Activated CD4-positive, alpha-beta T cell treated with anti-CD3 and anti-CD28 coated beads for 36 hours (primary cell): ENCODE measurements at regions of chr1 and their contacts with region 1.

Region 1: DNA sequence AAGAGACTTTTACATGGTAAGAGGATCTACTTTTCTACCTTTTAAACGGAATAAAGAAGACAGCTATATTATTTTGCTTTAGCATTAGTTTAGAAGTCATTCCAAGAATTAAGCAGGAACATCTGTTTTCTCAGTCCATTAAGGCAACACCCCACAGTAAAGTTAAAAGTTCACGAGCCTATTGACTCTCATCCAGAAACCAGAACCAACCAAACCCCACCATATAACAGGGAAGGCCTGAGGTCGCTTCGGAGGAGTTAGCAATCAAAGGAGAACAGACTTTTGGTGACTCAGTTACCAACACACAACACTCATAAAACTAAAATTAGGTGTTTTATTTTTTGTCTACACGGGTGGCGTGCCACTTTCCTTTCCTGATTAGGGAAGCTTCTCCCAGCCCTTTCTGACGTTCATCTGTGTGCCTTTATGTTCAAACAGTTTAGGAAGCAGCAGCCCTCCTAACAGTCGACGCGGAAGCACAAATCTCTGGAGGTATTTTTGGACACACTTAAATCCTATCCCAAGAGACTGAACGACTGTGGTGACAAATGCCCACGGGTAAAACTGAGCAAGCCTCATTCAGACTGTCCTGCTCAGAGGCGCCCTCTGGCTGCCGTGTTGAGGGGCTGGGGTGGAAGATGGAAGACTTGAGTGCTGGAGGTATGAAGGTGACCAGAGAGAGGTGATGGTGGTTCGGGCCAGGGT is 8.6 kb upstream of the PLA2G2C start:
- DNase-seq: peak; percentile 87
- ATAC-seq: peak; percentile 92
- H3K4me3 Mint-ChIP-seq: no peak overlapping the region
- H3K27ac Mint-ChIP-seq: no peak overlapping the region
- H3K4me1 Mint-ChIP-seq: peaks cover 2% of the 10 kb centered on the region
- H3K27me3 Mint-ChIP-seq: peaks cover 18% of the 10 kb centered on the region

Region 2: DNA sequence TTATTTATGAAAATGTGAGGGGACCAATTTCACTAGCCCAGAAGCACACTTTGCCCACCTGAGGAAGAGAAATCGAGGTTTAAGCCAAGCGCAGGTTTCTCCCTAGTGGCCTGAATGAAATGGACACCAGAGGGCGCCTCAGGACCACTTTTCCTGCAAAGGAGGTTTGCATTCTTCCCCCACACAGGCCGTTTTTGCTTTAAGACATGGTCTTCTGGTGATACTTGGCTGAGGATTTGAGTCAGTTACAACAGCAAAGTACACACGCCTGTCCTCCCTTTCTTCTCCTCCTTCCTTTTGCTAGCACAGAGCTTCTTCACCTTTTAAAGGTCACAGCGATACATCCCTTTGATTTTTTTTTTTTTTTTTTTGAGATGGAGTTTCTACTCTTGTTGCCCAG is 276.9 kb before region 1 on chr1:
- CTCF ChIA-PET with region 1: interaction called, 8 read pairs
- POLR2A ChIA-PET with region 1: no interaction called
- intact Hi-C with region 1: loop called (anchors 1 kb)
- DNase-seq: peak; percentile 90
- ATAC-seq: peak; percentile 78
- H3K4me3 Mint-ChIP-seq: no peak overlapping the region
- H3K27ac Mint-ChIP-seq: no peak overlapping the region
- H3K4me1 Mint-ChIP-seq: peaks cover 2% of the 10 kb centered on the region
- H3K27me3 Mint-ChIP-seq: no peaks in the 10 kb centered on the region

Region 3: GRCh38 chr1:19974822-19975416 is 220.0 kb before region 1 on chr1:
- CTCF ChIA-PET with region 1: interaction called, 11 read pairs
- POLR2A ChIA-PET with region 1: no interaction called
- intact Hi-C with region 1: loop called in 1 of 2 experiments (anchors 2 kb)
- DNase-seq: peak; percentile 46
- ATAC-seq: peak; percentile 65
- H3K4me3 Mint-ChIP-seq: no peak overlapping the region
- H3K27ac Mint-ChIP-seq: no peak overlapping the region
- H3K4me1 Mint-ChIP-seq: no peaks in the 10 kb centered on the region
- H3K27me3 Mint-ChIP-seq: peaks cover 19% of the 10 kb centered on the region

Region 4: GRCh38 chr1:20100632-20101355 is 94.1 kb before region 1 on chr1:
- CTCF ChIA-PET with region 1: no interaction called
- POLR2A ChIA-PET with region 1: no interaction called
- intact Hi-C with region 1: loop called in 1 of 2 experiments (anchors 1 kb)
- DNase-seq: peak; percentile 59
- ATAC-seq: peak; percentile 75
- H3K4me3 Mint-ChIP-seq: no peak overlapping the region
- H3K27ac Mint-ChIP-seq: no peak overlapping the region
- H3K4me1 Mint-ChIP-seq: peaks cover 5% of the 10 kb centered on the region
- H3K27me3 Mint-ChIP-seq: peaks cover 2% of the 10 kb centered on the region

Region 5: DNA sequence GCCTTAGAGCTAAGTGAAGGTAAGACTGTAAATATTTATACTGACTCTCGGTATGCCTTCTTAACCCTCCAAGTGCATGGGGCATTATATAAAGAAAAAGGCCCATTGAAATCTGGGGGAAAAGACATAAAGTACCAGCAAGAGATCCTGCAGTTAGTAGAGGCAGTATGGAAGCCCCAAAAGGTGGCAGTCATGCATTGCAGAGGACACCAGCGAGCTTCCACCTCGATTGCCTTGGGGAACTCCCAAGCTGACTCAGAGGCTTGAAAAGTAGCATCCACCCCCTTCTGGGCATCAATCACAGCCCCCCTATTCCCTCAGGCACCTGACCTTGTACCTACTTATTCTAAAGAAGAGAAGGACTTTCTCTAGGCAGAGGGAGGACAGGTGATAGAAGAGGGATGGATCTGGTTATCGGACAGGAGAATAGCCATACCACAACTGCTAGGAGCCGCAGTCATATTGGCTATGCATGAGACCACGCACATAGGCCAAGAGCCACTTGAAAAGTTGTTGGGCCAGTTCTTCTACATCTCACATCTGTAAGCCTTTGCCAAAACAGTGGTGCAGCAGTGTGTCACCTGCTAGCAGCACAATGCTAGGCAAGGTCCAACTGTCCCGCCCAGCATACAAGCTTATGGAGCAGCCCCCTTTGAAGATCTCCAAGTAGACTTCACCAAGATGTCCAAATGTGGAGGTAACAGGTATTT is 36.4 kb before region 1 on chr1:
- CTCF ChIA-PET with region 1: interaction called, 23 read pairs
- POLR2A ChIA-PET with region 1: no interaction called
- intact Hi-C with region 1: loop called (anchors 1 to 5 kb)
- DNase-seq: peak; percentile 44
- ATAC-seq: no peak
- H3K4me3 Mint-ChIP-seq: no peak overlapping the region
- H3K27ac Mint-ChIP-seq: no peak overlapping the region
- H3K4me1 Mint-ChIP-seq: peaks cover 6% of the 10 kb centered on the region
- H3K27me3 Mint-ChIP-seq: no peaks in the 10 kb centered on the region

Region 6: DNA sequence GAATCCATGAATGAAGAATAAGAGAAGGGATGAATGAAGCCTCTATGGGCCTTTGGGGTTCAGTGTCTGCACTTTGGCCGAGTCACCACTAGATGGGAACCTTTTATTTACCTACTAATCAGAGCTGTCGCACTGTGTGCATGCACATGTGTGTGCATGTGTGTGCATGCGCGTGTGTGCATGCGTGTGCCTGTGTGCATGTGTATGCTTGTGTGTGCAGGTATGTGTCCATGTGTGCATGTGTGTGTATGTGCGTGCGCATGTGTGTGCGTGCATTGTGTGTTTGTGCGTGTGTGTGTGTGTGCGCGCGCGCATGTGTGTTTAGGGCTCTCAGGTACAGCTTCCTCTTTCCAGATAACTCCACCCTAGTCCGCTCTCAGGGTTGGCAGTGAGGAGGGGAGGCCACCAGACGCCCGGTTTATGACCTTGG is 29.4 kb before region 1 on chr1:
- CTCF ChIA-PET with region 1: interaction called, 23 read pairs
- POLR2A ChIA-PET with region 1: no interaction called
- intact Hi-C with region 1: loop called in 1 of 2 experiments (anchors 1 kb)
- DNase-seq: peak; percentile 42
- ATAC-seq: peak; percentile 57
- H3K4me3 Mint-ChIP-seq: no peak overlapping the region
- H3K27ac Mint-ChIP-seq: no peak overlapping the region
- H3K4me1 Mint-ChIP-seq: no peaks in the 10 kb centered on the region
- H3K27me3 Mint-ChIP-seq: peaks cover 9% of the 10 kb centered on the region

Region 7: GRCh38 chr1:20178634-20179370 is 16.1 kb before region 1 on chr1:
- CTCF ChIA-PET with region 1: interaction called, 30 read pairs
- POLR2A ChIA-PET with region 1: interaction called, 3 read pairs
- intact Hi-C with region 1: no loop called
- DNase-seq: no peak
- ATAC-seq: no peak
- H3K4me3 Mint-ChIP-seq: no peak overlapping the region
- H3K27ac Mint-ChIP-seq: no peak overlapping the region
- H3K4me1 Mint-ChIP-seq: peaks cover 14% of the 10 kb centered on the region
- H3K27me3 Mint-ChIP-seq: no peaks in the 10 kb centered on the region